ENCODE measurements at regions of chr2 and their contacts with region 1.

Region 1: GRCh38 chr2:28710545-28710944 is 41.1 kb upstream of the PPP1CB start:
- DNase-seq: no peak
- H3K4me3 ChIP-seq: no peak overlapping the region
- H3K27ac ChIP-seq: no peak overlapping the region
- H3K4me1 ChIP-seq: no peaks in the 10 kb centered on the region
- H3K27me3 ChIP-seq: peaks cover 0 to 2% of the 10 kb centered on the region in 2 experiments
- CTCF ChIP-seq: no peak
- POLR2A ChIP-seq: no peak

Region 2: DNA sequence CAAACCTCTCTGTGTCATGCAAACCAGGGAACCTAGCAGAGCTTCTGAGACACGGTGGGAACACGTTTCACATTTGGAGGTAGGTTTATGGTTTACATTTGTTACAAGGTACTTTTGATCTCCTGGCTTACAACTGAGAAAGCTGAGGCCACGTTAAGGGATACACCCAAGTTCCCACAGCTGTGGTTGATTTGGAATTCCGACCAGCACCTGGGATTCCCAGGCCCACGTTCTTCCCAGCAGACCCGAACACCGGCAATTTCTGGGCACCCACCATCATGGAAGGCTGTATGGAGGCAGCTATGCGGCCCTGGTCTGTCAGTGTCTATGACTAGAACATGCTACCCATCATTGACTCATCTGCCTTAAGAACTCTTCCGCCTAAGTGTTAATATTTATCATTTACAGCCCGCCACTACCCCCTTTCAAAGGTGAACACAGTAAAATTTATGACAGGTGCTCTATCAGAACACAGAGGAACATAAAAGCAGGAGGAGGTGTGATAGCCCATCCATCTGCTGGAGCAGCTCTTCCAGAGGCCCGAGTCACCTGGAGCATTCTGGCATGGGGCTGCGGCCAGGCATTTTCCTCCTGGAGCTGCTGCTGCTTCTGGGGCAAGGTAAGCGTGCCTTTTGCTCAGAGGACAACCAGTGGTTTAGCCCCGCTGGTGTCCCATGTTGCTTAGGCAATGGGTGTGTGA is 214.8 kb before region 1 on chr2 and contains the start of gene PLB1:
- CTCF ChIA-PET with region 1: no interaction called
- POLR2A ChIA-PET with region 1: no interaction called
- dilution Hi-C with region 1: no loop called
- intact Hi-C with region 1: no loop called
- DNase-seq: no peak
- H3K4me3 ChIP-seq: no peak within 1 kb of the TSS
- H3K27ac ChIP-seq: no peak within 1 kb of the TSS
- H3K4me1 ChIP-seq: no peaks in the 10 kb centered on the region
- H3K27me3 ChIP-seq: peaks cover 4 to 10% of the 10 kb centered on the region in 2 experiments
- CTCF ChIP-seq: no peak
- POLR2A ChIP-seq: no peak
- total RNA-seq, gene PLB1: 0.80 and 1.1 TPM in 2 replicates

Region 3: DNA sequence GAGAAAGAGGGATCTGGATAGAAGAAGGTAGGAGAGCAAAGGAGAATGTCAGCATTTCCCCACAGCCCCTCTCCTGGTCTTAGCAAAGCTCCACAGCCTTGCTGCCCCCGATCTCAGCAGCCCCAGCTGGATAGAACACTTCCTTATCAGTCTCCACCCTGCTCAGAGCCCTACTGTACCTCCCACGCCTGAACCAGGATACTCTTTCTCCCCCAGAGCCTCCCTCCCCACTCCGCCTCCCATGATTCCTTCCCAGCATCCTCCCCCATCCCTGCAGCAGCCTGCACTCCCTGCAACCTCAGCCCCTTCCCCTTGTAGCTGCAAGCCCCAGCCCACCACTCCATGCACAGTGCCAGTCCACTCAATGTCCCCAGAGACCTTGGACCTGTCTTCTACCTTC is 188.9 kb before region 1 on chr2:
- CTCF ChIA-PET with region 1: no interaction called
- POLR2A ChIA-PET with region 1: no interaction called
- dilution Hi-C with region 1: no loop called
- intact Hi-C with region 1: no loop called
- DNase-seq: no peak
- H3K4me3 ChIP-seq: no peak overlapping the region
- H3K27ac ChIP-seq: no peak overlapping the region
- H3K4me1 ChIP-seq: no peaks in the 10 kb centered on the region
- H3K27me3 ChIP-seq: peaks cover 27 to 48% of the 10 kb centered on the region in 2 experiments
- CTCF ChIP-seq: no peak
- POLR2A ChIP-seq: no peak

Region 4: DNA sequence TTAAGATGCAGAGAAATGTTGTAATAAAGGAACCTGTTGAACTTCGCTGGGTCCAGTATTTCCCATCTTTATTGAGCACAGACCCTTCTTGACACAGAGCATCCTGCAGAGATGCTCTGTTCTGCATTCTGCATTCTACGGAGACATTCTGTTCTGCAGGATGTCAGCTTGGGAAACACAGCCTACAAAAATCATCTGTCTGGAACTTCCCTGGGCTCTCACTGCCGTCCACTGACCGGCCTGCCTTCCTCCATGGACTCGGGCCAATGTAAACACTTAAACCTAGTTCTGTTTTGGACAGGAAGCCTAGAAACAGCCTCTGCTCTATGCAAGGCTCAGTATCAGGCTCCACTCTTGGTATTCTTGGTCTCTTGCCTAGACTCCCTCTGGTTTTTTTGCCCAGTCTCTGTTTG is 49.0 kb before region 1 on chr2:
- CTCF ChIA-PET with region 1: no interaction called
- POLR2A ChIA-PET with region 1: no interaction called
- dilution Hi-C with region 1: no loop called
- intact Hi-C with region 1: no loop called
- DNase-seq: peak; percentile 90
- H3K4me3 ChIP-seq: no peak overlapping the region
- H3K27ac ChIP-seq: peak overlapping the region; percentile 69
- H3K4me1 ChIP-seq: peaks cover 42% of the 10 kb centered on the region
- H3K27me3 ChIP-seq: no peaks in the 10 kb centered on the region
- CTCF ChIP-seq: no peak
- POLR2A ChIP-seq: no peak

Region 5: DNA sequence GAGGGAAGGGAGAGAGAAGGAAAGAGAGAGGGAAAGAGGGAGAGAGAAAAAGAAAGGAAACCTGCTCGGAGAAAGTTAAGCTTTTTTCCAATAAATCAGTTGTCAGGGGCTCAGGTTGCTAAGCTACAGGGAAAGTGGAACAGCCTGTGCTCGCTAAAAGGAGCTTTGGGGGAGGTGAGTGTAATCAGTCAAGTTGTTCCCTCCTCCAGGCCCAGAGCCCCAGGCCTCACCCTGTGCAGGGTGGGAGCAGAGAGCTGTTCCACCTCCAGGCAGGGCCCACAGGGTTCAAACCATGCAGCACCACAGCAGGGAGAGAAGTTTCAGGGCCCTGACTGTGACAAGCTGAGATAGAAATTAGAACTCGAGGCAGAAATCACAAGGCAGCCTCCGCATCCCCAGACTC is 15.3 kb before region 1 on chr2:
- CTCF ChIA-PET with region 1: interaction called, 3 read pairs
- POLR2A ChIA-PET with region 1: no interaction called
- dilution Hi-C with region 1: no loop called
- intact Hi-C with region 1: loop called (anchors 2 kb)
- DNase-seq: no peak
- H3K4me3 ChIP-seq: no peak overlapping the region
- H3K27ac ChIP-seq: no peak overlapping the region
- H3K4me1 ChIP-seq: peaks cover 12% of the 10 kb centered on the region
- H3K27me3 ChIP-seq: no peaks in the 10 kb centered on the region
- CTCF ChIP-seq: no peak
- POLR2A ChIP-seq: no peak